ENCODE measurements at regions of chr7 and their contacts with region 1.

Region 1: GRCh38 chr7:129367700-129368388 is 66.4 kb upstream of the STRIP2 start:
- DNase-seq: peak; percentile 81
- H3K4me3 ChIP-seq: no peak overlapping the region
- H3K27ac ChIP-seq: no peak overlapping the region
- H3K4me1 ChIP-seq: peaks cover 12% of the 10 kb centered on the region
- CTCF ChIP-seq: peak; percentile 98

Region 2: GRCh38 chr7:129468087-129468486 is 100.2 kb after region 1 on chr7:
- CTCF ChIA-PET with region 1: interaction called, 7 read pairs
- POLR2A ChIA-PET with region 1: interaction called, 5 read pairs
- intact Hi-C with region 1: loop called (anchors 1 kb)
- DNase-seq: no peak
- H3K4me3 ChIP-seq: no peak overlapping the region
- H3K27ac ChIP-seq: no peak overlapping the region
- H3K4me1 ChIP-seq: no peaks in the 10 kb centered on the region
- CTCF ChIP-seq: no peak

Region 3: DNA sequence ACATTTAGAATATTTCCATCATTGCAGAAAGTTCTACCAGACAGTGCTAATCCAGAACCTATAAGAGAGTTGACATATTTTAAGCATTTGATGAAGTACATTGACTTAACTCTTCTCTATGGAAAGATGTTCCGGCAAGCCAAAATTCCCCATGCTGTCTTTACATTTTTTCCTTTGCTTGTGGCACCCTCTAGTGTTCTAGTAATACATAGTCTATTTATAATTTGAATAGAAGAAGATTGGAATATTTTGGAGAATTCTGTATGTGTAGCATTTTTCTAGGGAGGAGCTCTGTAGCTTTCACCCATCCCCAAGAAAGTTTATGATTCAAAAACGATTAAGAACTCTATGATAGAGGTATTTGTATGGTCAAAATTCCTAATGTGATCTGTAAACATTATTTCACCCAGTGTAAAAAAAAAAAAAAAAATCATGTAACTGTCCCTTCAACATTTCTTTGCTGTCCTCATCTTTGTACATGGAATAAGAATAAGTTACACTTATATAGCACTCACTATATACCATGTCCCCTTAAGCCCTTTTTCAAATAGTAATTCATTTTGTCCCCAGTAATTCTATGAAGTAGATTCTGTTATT is 276.9 kb after region 1 on chr7:
- CTCF ChIA-PET with region 1: no interaction called
- POLR2A ChIA-PET with region 1: no interaction called
- intact Hi-C with region 1: loop called (anchors 5 kb)
- DNase-seq: peak; percentile 11
- H3K4me3 ChIP-seq: no peak overlapping the region
- H3K27ac ChIP-seq: no peak overlapping the region
- H3K4me1 ChIP-seq: no peaks in the 10 kb centered on the region
- CTCF ChIP-seq: peak; percentile 71

Region 4: GRCh38 chr7:129825496-129826267 is 457.8 kb after region 1 on chr7:
- CTCF ChIA-PET with region 1: no interaction called
- POLR2A ChIA-PET with region 1: interaction called, 5 read pairs
- intact Hi-C with region 1: loop called (anchors 10 kb)
- DNase-seq: peak; percentile 78
- H3K4me3 ChIP-seq: peak overlapping the region; percentile 74
- H3K27ac ChIP-seq: no peak overlapping the region
- H3K4me1 ChIP-seq: peaks cover 4% of the 10 kb centered on the region
- CTCF ChIP-seq: peak; percentile 64